ENCODE measurements at regions of chr7 and their contacts with region 1.

Region 1: DNA sequence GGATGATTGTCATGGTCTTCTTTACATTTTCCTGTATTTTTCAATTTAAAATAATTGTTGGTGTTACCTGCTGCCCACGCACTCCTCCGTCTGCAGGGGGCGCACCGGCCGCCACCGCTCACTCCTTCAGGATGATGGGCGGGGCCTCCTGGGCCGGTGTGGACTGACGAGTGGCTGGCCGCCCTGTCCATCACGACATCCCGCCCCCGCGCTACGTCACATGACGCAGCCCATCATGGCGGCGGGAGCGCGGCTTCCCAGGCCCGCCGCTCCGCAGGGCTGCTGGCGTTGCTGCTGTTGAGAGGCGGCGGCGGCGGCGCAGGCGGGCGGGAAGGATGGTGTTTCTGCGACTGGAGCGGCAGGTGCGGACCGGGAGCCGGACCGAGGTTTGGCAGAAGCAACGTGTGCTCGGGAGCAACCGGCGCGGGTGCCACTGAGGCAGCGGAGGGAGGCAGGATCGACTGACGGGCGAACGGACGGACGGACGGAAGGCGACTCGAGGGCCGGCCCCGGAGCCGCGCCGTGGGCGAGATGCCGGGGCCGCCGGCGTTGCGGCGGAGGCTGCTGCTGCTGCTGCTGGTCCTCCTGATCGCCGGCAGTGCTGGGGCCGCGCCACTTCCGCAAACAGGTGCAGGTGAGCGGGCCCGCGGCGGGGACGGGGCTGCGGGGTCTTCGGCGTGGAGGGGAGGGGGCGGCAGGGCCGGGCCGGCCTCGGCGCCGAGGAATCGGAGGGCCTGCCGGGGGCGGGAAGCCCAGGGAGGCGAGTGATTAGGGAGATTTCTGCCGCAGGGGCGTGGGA is at the start of gene LMTK2:
- DNase-seq: peak; percentile 95
- H3K4me3 ChIP-seq: peak within 1 kb of the TSS; percentile 98
- H3K27ac ChIP-seq: peak within 1 kb of the TSS; percentile 88
- H3K4me1 ChIP-seq: peaks cover 15% of the 10 kb centered on the region
- H3K27me3 ChIP-seq: no peaks in the 10 kb centered on the region
- CTCF ChIP-seq: peak; percentile 89
- total RNA-seq, gene LMTK2: 37.2 to 61.2 TPM

Region 2: GRCh38 chr7:98021588-98022351 is 85.1 kb before region 1 on chr7:
- intact Hi-C with region 1: loop called (anchors 5 kb)
- DNase-seq: peak; percentile 86
- H3K4me3 ChIP-seq: no peak overlapping the region
- H3K27ac ChIP-seq: no peak overlapping the region
- H3K4me1 ChIP-seq: no peaks in the 10 kb centered on the region
- H3K27me3 ChIP-seq: no peaks in the 10 kb centered on the region
- CTCF ChIP-seq: peak; percentile 93

Region 3: GRCh38 chr7:98157761-98158160 is 50.9 kb after region 1 on chr7:
- intact Hi-C with region 1: no loop called
- DNase-seq: no peak
- H3K4me3 ChIP-seq: no peak overlapping the region
- H3K27ac ChIP-seq: no peak overlapping the region
- H3K4me1 ChIP-seq: no peaks in the 10 kb centered on the region
- H3K27me3 ChIP-seq: no peaks in the 10 kb centered on the region
- CTCF ChIP-seq: no peak

Region 4: DNA sequence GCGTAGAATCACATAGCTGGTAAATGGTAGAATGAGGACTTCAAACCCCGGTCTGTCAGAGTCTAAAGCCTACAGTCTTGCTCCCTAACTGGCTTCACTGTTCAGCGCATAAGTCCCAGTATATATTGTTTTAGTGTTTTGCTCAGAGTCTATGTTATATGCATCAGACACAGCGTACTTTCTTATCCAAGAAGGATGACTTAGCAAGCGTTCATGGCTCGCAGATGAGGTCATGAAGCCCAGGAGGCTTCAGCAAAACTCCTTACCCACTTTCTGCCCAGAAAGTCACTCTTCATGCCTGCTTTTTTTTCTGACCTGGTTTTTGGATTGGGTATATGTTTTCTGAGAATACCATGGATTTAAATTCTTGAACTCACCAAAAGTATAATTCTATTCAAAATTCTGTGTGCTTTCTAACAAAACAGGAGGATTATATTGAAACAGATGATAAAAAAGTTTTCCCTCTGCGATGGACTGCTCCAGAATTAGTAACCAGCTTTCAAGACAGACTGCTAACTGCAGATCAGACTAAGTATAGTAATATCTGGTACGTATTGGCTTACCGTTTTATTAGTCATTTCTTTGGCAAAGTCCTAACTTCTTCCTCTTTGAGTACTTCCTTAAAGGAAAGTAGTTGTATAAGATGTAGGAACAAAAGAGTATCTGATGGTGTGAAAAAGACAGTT is 79.7 kb after region 1 on chr7:
- intact Hi-C with region 1: no loop called
- DNase-seq: no peak
- H3K4me3 ChIP-seq: no peak overlapping the region
- H3K27ac ChIP-seq: no peak overlapping the region
- H3K4me1 ChIP-seq: no peaks in the 10 kb centered on the region
- H3K27me3 ChIP-seq: no peaks in the 10 kb centered on the region
- CTCF ChIP-seq: no peak